Activated CD4-positive, alpha-beta T cell treated with anti-CD3 and anti-CD28 coated beads for 36 hours (primary cell): ENCODE measurements at regions of chr6 and their contacts with region 1.

Region 1: DNA sequence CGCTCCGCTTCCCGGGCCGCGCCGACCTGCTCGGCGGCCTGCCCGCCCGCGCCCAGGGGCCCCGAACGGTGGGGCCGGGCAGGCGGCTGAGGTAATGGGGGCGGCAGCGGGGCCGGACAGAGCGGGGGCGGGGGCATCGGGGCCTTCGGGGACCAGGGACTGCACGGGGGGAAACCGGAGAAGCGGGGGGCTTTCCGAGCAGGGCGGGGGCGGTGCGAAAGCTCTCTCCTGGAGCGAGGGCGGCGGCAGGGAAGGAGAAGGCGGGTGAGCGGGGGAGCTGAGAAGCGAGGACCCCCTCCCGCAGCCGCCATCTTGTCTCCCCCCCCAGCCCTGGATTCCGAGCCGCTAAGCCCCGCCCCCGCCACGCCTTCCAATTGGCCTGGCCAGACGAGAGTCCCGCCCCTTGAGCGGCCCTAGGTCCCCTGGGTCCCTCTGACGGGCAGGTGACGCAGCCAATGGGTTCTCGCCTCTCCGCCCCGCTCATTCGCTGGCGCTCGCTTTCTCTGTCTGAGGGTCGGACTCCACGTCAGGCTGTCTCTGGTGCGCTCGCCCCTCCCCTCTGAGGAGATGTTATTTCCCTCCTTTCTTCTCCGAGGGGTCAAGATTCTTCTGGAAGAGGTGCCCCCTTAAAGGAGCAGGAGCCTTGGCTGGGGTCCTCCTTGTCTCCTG is 470 bp downstream of the BRPF3 start:
- DNase-seq: peak; percentile 100
- ATAC-seq: peak; percentile 96
- H3K4me3 Mint-ChIP-seq: peak overlapping the region; percentile 82
- H3K27ac Mint-ChIP-seq: peak overlapping the region; percentile 90
- H3K4me1 Mint-ChIP-seq: peaks cover 45% of the 10 kb centered on the region
- H3K27me3 Mint-ChIP-seq: no peaks in the 10 kb centered on the region

Region 2: GRCh38 chr6:34374069-34374468 is 1822.9 kb before region 1 on chr6:
- CTCF ChIA-PET with region 1: no interaction called
- POLR2A ChIA-PET with region 1: no interaction called
- intact Hi-C with region 1: no loop called
- DNase-seq: no peak
- ATAC-seq: no peak
- H3K4me3 Mint-ChIP-seq: no peak overlapping the region
- H3K27ac Mint-ChIP-seq: no peak overlapping the region
- H3K4me1 Mint-ChIP-seq: peaks cover 13% of the 10 kb centered on the region
- H3K27me3 Mint-ChIP-seq: no peaks in the 10 kb centered on the region

Region 3: DNA sequence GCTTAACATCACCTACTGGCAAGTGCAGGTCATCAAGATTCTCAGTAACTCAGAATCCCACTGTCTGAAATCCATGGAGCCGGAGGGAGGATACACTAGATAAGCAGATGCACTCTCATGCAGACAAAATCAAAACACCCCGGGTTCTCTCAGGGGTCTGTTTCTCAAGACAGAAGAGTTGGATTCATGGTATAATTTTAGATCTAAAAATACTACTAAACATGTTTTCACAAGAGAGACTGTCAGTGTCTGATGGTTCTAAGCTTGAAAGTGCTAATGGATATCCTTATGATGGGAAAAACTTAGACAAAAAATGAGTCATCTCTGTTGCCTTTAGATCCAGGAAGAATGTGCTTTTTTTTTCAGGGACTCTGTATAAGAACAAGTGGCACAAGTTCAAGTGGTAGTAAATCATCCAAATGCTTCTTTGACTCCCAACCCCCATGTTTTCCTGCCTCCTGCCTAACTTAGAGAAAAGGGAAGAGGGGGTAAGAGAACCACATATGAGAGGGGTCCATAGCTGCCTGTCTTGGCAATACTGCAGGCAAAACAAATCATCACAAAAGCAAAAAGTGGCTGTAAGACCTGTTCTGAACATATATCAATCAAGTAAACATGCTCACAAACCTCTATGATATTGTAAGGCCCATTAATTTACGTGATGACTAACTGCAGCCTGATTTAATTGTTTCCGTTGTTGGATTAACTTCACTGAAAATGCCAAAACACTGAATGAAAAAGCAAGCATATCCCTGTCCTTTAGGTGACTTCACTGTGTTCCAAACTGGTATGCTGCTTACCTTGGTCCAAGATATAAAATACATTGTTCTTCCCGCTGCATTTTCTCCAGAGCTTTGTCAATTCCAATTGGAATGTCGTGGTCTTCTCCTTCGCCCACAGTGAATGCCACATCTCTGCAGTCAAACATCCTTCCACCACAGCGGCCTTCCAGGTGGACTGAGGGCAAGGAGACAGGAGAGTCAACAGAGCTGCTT is 600.3 kb before region 1 on chr6:
- CTCF ChIA-PET with region 1: no interaction called
- POLR2A ChIA-PET with region 1: no interaction called
- intact Hi-C with region 1: no loop called
- DNase-seq: no peak
- ATAC-seq: no peak
- H3K4me3 Mint-ChIP-seq: no peak overlapping the region
- H3K27ac Mint-ChIP-seq: peak overlapping the region; percentile 60
- H3K4me1 Mint-ChIP-seq: peaks cover 85% of the 10 kb centered on the region
- H3K27me3 Mint-ChIP-seq: no peaks in the 10 kb centered on the region

Region 4: GRCh38 chr6:35920793-35921732 is 276.0 kb before region 1 on chr6 and contains the start of gene SRPK1:
- CTCF ChIA-PET with region 1: no interaction called
- POLR2A ChIA-PET with region 1: no interaction called
- intact Hi-C with region 1: loop called in 1 of 2 experiments (anchors 1 kb)
- DNase-seq: peak; percentile 94
- ATAC-seq: peak; percentile 80
- H3K4me3 Mint-ChIP-seq: peak within 1 kb of the TSS; percentile 95
- H3K27ac Mint-ChIP-seq: peak within 1 kb of the TSS; percentile 97
- H3K4me1 Mint-ChIP-seq: peaks cover 45% of the 10 kb centered on the region
- H3K27me3 Mint-ChIP-seq: no peaks in the 10 kb centered on the region
- total RNA-seq, gene SRPK1: 100 to 118 TPM

Region 5: DNA sequence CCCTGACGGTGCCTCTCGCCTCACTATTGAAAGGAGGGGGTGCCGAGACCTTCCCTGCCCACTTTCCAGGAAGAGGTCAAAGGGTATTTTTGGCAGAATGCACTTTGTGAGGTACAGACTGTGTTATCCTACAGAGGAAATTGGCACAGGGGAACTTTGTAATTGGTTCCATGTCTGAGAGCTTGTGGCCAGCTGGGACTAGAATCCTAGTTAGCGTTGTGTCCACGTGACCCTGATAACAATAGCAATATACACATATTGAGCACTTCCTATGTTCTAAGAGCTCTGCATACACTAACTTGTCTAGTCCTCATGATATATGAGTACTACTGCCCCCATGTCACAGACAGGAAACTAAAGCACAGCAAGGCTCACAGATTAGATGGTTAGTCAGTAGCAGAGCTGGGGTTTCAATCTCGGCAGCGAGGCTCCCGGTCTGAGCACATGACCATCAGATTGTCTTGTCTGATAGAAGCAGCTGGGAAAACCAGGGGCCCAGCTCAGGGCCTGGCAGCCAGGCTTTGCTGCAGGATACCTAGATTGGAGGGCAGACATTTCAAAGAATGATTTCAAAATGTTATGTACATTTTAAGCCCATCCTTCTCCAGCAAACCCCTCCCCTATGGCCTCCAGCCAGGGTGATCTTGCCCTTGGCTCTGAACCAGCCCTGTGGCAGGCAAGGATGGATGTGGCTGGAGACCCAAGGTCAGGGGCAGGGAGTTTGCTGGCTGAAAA is 65.3 kb before region 1 on chr6:
- CTCF ChIA-PET with region 1: interaction called, 5 read pairs
- POLR2A ChIA-PET with region 1: interaction called, 4 read pairs
- intact Hi-C with region 1: loop called (anchors 1 to 2 kb)
- DNase-seq: peak; percentile 80
- ATAC-seq: peak; percentile 84
- H3K4me3 Mint-ChIP-seq: peak overlapping the region; percentile 84
- H3K27ac Mint-ChIP-seq: peak overlapping the region; percentile 96
- H3K4me1 Mint-ChIP-seq: peaks cover 55% of the 10 kb centered on the region
- H3K27me3 Mint-ChIP-seq: no peaks in the 10 kb centered on the region

Region 6: GRCh38 chr6:36442671-36443470 is 245.9 kb after region 1 on chr6 and contains the starts of genes KCTD20 and PXT1:
- CTCF ChIA-PET with region 1: no interaction called
- POLR2A ChIA-PET with region 1: no interaction called
- intact Hi-C with region 1: loop called in 1 of 2 experiments (anchors 1 kb)
- DNase-seq: peak; percentile 94
- ATAC-seq: peak; percentile 78
- H3K4me3 Mint-ChIP-seq: peak within 1 kb of the TSS; percentile 95
- H3K27ac Mint-ChIP-seq: peak within 1 kb of the TSS; percentile 97
- H3K4me1 Mint-ChIP-seq: peaks cover 27% of the 10 kb centered on the region
- H3K27me3 Mint-ChIP-seq: no peaks in the 10 kb centered on the region
- total RNA-seq, gene KCTD20: 46.5 to 50.6 TPM
- total RNA-seq, gene PXT1: 0.11 to 0.14 TPM

Region 7: DNA sequence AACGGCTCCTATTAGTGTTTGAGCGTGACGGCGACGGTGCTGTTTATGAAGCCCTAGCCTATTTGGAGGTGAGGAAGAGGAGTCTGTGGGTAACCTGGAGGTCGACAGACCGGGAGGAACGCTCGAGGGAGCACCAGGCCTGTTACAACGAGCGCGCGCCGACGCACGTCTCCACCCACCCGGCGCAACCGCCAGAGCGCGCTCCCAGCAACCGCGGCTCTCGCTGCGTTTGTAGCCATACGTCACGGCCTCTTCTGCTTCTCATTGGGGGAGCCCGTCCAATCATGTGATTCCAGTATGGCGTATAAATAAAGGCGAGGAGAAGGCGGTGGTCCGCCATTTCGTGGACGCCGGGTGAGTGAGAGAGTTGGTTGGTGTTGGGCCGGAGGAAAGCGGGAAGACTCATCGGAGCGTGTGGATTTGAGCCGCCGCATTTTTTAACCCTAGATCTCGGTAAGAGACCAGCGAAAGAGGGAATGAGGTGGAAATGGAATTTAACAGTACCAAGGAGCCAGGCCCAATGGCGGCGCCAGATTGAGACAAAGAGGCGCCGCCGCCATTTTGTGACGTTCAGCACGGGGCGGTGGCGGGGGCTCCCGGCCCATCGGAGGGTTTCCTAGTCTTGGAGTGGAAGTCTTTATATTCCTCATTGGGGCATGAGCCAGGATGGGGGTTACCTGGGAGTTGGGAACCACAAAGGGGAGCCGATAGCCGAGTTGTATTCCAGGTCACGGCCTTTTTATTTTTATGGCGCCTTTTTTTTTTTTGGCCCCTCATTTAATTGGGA is 397.2 kb after region 1 on chr6 and contains the start of gene SRSF3:
- CTCF ChIA-PET with region 1: no interaction called
- POLR2A ChIA-PET with region 1: no interaction called
- intact Hi-C with region 1: loop called in 1 of 2 experiments (anchors 1 kb)
- DNase-seq: peak; percentile 98
- ATAC-seq: peak; percentile 92
- H3K4me3 Mint-ChIP-seq: peak within 1 kb of the TSS; percentile 88
- H3K27ac Mint-ChIP-seq: peak within 1 kb of the TSS; percentile 99
- H3K4me1 Mint-ChIP-seq: peaks cover 21% of the 10 kb centered on the region
- H3K27me3 Mint-ChIP-seq: no peaks in the 10 kb centered on the region
- total RNA-seq, gene SRSF3: 298 to 464 TPM